MCF 10A (cell line): ENCODE measurements at regions of chr1 and their contacts with region 1.

Region 1: DNA sequence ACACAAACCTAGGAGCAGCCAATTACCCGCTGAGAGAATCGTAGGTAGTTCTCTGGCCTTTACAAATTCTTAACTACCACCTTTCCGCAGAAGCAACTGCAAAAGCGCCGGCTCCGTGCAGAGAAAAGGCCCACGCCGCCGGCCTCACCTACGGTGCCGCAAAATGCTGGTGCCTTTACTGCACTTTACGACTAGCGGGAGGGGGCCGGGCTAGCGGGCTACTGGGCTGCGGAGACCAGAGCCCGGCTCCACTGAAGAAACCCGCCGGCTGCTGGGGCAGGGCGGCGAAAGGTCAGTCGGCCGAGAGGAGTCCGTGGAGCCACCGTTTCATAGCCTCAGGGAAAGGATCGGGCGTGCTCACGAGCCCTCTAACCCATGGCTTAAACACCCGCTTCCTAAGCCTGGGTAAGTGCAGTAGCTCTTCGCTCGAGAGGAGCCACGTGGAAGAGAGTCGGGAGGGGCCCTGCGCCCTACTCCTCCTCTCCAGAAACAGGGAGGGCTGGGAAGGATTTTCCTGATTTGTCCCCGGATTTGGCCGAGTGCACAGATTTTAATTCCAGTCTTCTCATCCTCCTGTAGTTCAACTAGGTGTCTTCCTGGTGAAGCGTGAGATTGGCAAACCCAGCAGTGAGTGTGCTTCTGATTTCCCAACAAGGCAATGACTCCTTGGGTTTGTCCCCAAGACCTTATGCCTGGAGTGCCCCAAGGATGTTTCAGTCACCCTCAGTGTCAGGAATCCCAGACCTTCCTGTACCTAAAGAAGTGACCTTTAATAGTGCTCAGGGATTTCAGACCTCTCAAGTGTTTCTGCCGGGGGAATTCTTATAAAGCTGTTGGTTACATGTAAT is at the start of gene DPH5:
- DNase-seq: peak; percentile 90
- H3K4me3 Mint-ChIP-seq: peak within 1 kb of the TSS; percentile 78
- H3K27ac Mint-ChIP-seq: peak within 1 kb of the TSS; percentile 79
- H3K4me1 Mint-ChIP-seq: peaks cover 14% of the 10 kb centered on the region
- H3K27me3 Mint-ChIP-seq: no peaks in the 10 kb centered on the region
- CTCF ChIP-seq: no peak
- total RNA-seq, gene DPH5: 63.5 and 76.8 TPM in 2 replicates

Region 2: DNA sequence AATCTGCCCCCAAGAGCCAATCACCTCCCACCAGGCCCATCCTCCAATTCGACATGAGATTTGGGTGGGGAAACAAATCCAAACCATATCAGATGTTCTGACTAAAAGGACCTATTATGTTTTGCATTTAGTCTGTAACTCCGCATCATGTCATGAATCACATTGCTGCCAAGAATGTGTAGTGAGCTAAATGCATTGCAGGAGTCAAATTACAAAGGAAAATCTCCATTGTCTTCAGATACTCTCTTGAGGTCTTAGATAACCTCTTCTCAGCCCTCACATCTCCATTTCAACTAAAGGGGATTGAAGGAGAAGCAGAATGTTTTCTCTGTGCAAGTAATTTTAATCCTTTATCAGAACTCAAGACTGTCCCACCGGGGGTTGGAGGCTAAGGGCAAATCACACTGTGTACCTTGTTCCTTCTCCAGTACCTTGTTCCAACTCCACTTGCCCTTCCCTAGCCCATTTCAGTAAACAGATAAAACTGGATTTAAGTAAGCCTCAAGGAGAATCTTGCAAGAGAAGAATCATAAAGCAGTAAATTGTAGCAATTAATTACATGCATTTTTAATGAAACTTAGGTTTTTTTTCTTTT is 165.4 kb before region 1 on chr1:
- CTCF ChIA-PET with region 1: no interaction called
- POLR2A ChIA-PET with region 1: no interaction called
- intact Hi-C with region 1: no loop called
- DNase-seq: peak; percentile 65
- H3K4me3 Mint-ChIP-seq: no peak overlapping the region
- H3K27ac Mint-ChIP-seq: no peak overlapping the region
- H3K4me1 Mint-ChIP-seq: peaks cover 2% of the 10 kb centered on the region
- H3K27me3 Mint-ChIP-seq: no peaks in the 10 kb centered on the region
- CTCF ChIP-seq: no peak

Region 3: GRCh38 chr1:100921109-100921706 is 104.7 kb before region 1 on chr1:
- CTCF ChIA-PET with region 1: interaction called, 4 read pairs
- POLR2A ChIA-PET with region 1: no interaction called
- intact Hi-C with region 1: loop called (anchors 10 kb)
- DNase-seq: peak; percentile 66
- H3K4me3 Mint-ChIP-seq: no peak overlapping the region
- H3K27ac Mint-ChIP-seq: no peak overlapping the region
- H3K4me1 Mint-ChIP-seq: no peaks in the 10 kb centered on the region
- H3K27me3 Mint-ChIP-seq: no peaks in the 10 kb centered on the region
- CTCF ChIP-seq: peak; percentile 53

Region 4: DNA sequence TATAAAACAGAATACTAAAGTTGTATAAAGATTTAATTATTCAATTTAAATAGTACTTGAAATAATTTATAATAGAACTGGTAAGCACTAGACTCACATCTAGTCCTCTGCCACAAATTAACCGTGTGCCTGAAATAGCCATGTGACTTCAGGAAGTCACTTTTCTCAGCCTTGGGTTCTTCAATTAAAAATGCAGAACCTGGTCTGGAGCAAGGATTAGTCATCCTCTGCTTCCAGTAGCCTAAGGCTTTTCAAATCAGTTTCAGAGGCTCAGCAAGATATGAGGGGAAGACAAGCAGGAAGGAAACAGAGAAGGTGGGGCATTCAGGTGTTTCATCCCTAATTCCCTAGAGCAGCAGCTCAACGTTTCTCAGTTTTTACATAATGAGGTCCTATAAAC is 23.3 kb before region 1 on chr1:
- CTCF ChIA-PET with region 1: no interaction called
- POLR2A ChIA-PET with region 1: interaction called, 25 read pairs
- intact Hi-C with region 1: loop called (anchors 2 kb)
- DNase-seq: peak; percentile 73
- H3K4me3 Mint-ChIP-seq: no peak overlapping the region
- H3K27ac Mint-ChIP-seq: peak overlapping the region; percentile 39
- H3K4me1 Mint-ChIP-seq: peaks cover 31% of the 10 kb centered on the region
- H3K27me3 Mint-ChIP-seq: no peaks in the 10 kb centered on the region
- CTCF ChIP-seq: no peak

Region 5: DNA sequence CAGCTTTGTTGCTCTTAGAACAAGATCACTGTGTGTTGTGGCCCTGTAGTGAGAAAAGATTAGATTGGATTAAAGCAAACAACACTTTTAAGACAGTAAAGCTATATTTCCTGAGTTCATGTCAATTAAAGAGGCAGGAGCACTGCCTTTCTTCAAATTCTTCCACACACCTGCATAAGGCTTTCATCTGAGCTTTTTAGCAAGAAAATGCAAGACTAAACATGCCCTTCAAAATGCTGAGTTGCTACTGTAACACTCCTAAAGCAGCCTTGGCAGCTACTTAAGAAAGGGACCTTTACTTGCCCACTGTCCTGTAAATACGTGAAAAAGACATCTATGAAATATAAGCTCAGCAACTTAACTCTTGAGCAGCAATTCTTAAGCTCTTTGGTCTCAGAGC is 12.1 kb before region 1 on chr1:
- CTCF ChIA-PET with region 1: interaction called, 5 read pairs
- POLR2A ChIA-PET with region 1: interaction called, 18 read pairs
- intact Hi-C with region 1: no loop called
- DNase-seq: no peak
- H3K4me3 Mint-ChIP-seq: no peak overlapping the region
- H3K27ac Mint-ChIP-seq: peak overlapping the region; percentile 61
- H3K4me1 Mint-ChIP-seq: no peaks in the 10 kb centered on the region
- H3K27me3 Mint-ChIP-seq: no peaks in the 10 kb centered on the region
- CTCF ChIP-seq: no peak

Region 6: DNA sequence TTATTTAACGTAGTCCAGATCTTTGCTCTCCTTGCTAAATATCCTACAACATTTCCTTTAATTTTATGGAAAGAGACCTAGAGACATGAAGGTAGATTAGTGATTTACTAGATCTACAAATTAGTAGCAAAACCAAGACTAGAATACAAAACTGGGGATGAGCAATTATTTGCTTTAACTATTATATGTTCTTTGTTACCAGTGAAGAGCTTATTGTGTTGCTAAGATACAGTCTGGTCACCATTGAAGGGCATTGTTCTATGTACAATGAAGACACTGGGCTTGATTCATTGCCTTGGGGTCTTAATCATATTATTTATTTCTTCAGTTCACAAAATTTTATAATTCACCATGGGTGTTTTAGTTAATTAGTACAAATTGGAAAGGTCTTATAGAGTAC is 299.3 kb after region 1 on chr1:
- CTCF ChIA-PET with region 1: no interaction called
- POLR2A ChIA-PET with region 1: no interaction called
- intact Hi-C with region 1: no loop called
- DNase-seq: no peak
- H3K4me3 Mint-ChIP-seq: no peak overlapping the region
- H3K27ac Mint-ChIP-seq: no peak overlapping the region
- H3K4me1 Mint-ChIP-seq: no peaks in the 10 kb centered on the region
- H3K27me3 Mint-ChIP-seq: peaks cover 75% of the 10 kb centered on the region
- CTCF ChIP-seq: no peak